Transverse colon (tissue), 4 donors: ENCODE measurements at regions of chr7 and their contacts with region 1.

Region 1: DNA sequence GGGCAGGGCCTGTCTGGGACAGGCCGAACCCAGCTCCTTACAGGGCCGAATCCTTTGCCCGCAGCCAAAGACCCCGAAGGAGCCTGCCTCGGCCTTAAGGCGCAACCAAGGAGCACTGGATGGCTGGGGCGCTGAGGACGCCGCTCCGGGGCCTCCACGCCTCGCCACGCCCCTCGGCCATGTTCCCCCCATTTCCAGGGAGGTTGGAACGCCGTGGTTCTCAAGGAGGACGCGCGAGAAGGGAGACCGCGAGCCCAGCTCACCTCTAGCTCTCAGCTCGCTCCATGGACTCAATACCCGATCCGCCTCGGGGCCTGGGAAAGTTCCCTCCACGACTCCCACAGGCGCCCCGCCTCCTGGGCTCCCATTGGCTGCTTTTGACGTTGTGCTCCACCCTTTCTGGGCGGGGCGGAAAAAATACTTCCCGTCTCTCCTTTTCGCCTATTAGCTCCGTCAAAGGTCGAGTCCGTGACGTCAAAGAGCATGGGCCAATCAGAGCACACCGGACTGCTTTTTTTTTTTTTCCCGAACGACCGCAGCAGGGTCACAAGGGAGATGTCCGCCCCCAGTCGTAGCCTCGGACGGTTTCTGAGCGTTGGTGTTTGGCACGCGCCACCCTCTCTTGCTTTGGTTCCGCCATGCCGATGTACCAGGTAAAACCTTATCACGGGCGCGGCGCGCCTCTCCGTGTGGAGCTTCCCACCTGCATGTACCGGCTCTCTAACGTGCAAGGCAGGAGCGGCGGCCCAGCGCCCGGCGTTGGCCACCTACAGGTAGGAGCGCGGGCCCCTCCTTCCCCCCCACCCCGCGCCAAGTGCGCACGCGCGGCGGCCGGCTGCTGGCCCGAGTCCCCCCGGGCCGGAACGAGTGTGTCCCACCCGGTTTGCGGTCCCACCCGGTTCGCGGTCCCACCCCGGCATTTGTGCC is 305.7 kb downstream of the TYW1 start:
- DNase-seq: peak; percentile 99
- H3K4me3 ChIP-seq: peak overlapping the region; percentile 59 to 69 (median 64)
- H3K27ac ChIP-seq: peak overlapping the region; percentile 92 to 97 (median 94)
- H3K4me1 ChIP-seq: peaks cover 0 to 18% (median 9%) of the 10 kb centered on the region in 4 donors
- H3K27me3 ChIP-seq: no peaks in the 10 kb centered on the region
- CTCF ChIP-seq: peak; percentile 41 to 86 (median 49)
- EP300 ChIP-seq: no peak
- POLR2A ChIP-seq: peak; percentile 88

Region 2: DNA sequence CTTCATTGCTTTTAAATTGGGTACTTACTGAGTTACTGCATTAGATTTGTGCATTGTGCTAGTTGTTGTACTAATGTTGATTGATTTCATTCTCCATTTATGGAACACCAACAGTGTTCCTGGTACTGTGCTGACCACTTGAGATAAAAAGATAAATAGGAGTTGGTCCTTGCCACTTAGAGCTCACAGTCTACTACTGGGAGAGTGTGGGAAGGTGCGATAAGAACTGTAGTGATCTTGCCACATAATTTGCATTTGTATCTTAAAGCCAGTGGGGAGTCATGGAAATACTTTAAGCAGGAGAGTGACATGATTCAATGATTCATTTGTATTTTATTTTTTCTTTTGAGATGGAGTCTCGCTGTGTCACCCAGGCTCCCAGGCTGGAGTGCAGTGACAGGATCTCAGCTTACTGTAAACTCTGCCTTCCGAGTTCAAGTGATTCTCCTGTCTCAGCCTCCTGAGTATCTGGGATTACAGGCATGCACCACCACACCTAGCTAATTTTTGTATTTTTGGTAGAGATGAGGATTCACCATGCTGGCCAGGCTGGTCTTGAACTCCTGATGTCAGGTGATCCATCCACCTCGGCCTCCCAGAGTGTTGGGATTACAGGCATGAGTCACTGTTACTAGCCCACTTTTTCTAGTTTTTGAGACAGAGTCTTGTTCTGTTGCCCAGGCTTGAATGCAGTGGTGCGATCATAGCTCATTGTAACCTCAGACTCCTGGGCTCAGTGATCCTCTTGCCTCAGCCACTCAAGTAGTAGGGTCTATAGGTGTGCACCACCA is 432.5 kb before region 1 on chr7:
- in situ Hi-C with region 1: no loop called
- intact Hi-C with region 1: no loop called
- DNase-seq: no peak
- H3K4me3 ChIP-seq: no peak overlapping the region
- H3K27ac ChIP-seq: no peak overlapping the region
- H3K4me1 ChIP-seq: no peaks in the 10 kb centered on the region
- H3K27me3 ChIP-seq: no peaks in the 10 kb centered on the region
- CTCF ChIP-seq: no peak
- EP300 ChIP-seq: no peak
- POLR2A ChIP-seq: no peak

Region 3: DNA sequence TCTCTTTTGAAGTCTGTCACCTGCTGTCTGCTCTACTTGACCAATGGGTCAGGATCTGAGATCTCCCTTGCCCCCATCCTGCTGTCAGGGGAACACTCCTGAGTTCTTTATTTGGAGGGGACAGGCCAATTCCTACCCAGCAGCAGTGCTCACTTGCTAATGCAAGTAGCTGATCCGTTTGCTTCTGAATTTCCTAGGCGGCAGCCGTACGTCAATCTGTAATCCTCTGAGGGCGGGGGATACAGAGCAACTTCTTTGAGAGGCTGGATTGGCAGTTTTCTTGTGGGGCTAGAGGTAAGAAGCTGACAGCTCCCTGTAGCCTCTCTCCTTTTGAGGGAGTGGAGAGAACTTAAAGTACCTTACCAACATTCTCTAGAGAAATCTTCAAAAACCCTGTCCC is 269.1 kb before region 1 on chr7:
- in situ Hi-C with region 1: loop called in 1 of 4 experiments (anchors 25 kb)
- intact Hi-C with region 1: no loop called
- DNase-seq: no peak
- H3K4me3 ChIP-seq: no peak overlapping the region
- H3K27ac ChIP-seq: no peak overlapping the region
- H3K4me1 ChIP-seq: no peaks in the 10 kb centered on the region
- H3K27me3 ChIP-seq: no peaks in the 10 kb centered on the region
- CTCF ChIP-seq: no peak
- EP300 ChIP-seq: no peak
- POLR2A ChIP-seq: no peak

Region 4: GRCh38 chr7:67618556-67619162 is 316.3 kb after region 1 on chr7:
- in situ Hi-C with region 1: no loop called
- intact Hi-C with region 1: no loop called
- DNase-seq: no peak
- H3K4me3 ChIP-seq: no peak overlapping the region
- H3K27ac ChIP-seq: no peak overlapping the region
- H3K4me1 ChIP-seq: no peaks in the 10 kb centered on the region
- H3K27me3 ChIP-seq: no peaks in the 10 kb centered on the region
- CTCF ChIP-seq: no peak
- EP300 ChIP-seq: no peak
- POLR2A ChIP-seq: no peak

Region 5: DNA sequence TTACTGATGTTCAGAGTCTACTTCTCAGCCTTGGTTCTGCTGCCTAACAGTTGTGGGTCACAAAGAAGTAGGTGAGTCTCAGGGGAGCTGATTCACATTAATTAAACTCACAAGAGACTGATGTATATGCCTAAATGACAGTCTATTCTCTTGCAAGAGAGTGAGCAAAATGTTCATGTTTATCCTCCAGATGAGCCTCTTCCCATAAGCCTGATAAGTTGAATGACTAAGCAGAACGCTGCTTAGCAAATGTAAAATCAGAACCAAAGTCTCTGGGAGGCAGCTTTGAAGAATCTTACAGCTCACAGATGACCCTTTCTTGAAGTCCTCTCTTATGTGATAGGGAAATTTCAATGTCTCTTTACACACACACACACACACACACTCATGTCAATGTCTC is 786.5 kb after region 1 on chr7:
- in situ Hi-C with region 1: no loop called
- intact Hi-C with region 1: no loop called
- DNase-seq: no peak
- H3K4me3 ChIP-seq: no peak overlapping the region
- H3K27ac ChIP-seq: no peak overlapping the region
- H3K4me1 ChIP-seq: no peaks in the 10 kb centered on the region
- H3K27me3 ChIP-seq: no peaks in the 10 kb centered on the region
- CTCF ChIP-seq: no peak
- EP300 ChIP-seq: no peak
- POLR2A ChIP-seq: no peak